ENCODE measurements at regions of chr9 and their contacts with region 1.

Region 1: DNA sequence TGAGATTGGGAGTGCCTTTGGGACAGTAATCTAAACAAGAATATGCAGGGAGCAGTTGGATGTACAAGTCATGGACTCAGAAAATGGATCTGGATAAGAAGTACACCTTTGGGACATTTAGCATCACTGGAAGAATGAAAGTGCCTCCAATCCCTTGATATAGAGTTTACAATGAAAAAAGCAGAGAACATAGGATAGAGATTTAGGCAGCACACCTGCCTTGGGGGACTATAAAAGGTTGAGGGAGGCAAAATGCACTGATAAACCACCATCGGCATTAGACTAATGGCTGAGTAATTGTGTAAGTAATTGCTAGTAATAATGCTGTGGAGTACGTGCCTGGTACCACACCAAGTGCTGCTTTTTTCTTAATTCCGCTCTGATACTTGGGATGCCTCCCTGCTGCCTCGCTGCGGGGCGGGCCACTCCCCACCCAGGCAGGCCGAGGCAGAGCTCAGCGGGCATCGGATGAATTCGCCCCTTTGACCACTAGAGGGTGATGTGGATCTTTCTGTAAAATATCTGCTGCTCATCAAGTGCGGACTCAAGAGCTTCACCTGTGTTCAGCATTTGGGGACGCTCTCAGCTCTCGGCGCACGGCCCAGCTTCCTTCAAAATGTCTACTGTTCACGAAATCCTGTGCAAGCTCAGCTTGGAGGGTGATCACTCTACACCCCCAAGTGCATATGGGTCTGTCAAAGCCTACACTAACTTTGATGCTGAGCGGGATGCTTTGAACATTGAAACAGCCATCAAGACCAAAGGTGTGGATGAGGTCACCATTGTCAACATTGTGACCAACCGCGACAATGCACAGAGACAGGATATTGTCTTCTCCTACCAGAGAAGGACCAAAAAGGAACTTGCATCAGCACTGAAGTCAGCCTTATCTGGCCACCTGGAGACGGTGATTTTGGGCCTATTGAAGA is 99.9 kb downstream of the ANKRD18B start:
- DNase-seq: peak; percentile 78
- ATAC-seq: peak; percentile 98
- H3K4me3 Mint-ChIP-seq: no peak overlapping the region
- H3K27ac Mint-ChIP-seq: no peak overlapping the region
- H3K4me1 Mint-ChIP-seq: peaks cover 7% of the 10 kb centered on the region
- H3K27me3 Mint-ChIP-seq: peaks cover 28% of the 10 kb centered on the region
- CTCF ChIP-seq: peak; percentile 88

Region 2: GRCh38 chr9:33649463-33649862 is 25.5 kb after region 1 on chr9:
- CTCF ChIA-PET with region 1: interaction called, 19 read pairs
- POLR2A ChIA-PET with region 1: no interaction called
- intact Hi-C with region 1: no loop called
- DNase-seq: peak; percentile 55
- ATAC-seq: peak; percentile 56
- H3K4me3 Mint-ChIP-seq: no peak overlapping the region
- H3K27ac Mint-ChIP-seq: no peak overlapping the region
- H3K4me1 Mint-ChIP-seq: peaks cover 11% of the 10 kb centered on the region
- H3K27me3 Mint-ChIP-seq: peaks cover 21% of the 10 kb centered on the region
- CTCF ChIP-seq: no peak

Region 3: GRCh38 chr9:33703430-33704102 is 79.6 kb after region 1 on chr9:
- CTCF ChIA-PET with region 1: interaction called, 10 read pairs
- POLR2A ChIA-PET with region 1: no interaction called
- intact Hi-C with region 1: no loop called
- DNase-seq: no peak
- ATAC-seq: no peak
- H3K4me3 Mint-ChIP-seq: no peak overlapping the region
- H3K27ac Mint-ChIP-seq: no peak overlapping the region
- H3K4me1 Mint-ChIP-seq: peaks cover 3% of the 10 kb centered on the region
- H3K27me3 Mint-ChIP-seq: peaks cover 10% of the 10 kb centered on the region
- CTCF ChIP-seq: no peak

Region 4: GRCh38 chr9:33731142-33731541 is 107.2 kb after region 1 on chr9:
- CTCF ChIA-PET with region 1: interaction called, 353 read pairs
- POLR2A ChIA-PET with region 1: no interaction called
- intact Hi-C with region 1: no loop called
- DNase-seq: no peak
- ATAC-seq: no peak
- H3K4me3 Mint-ChIP-seq: no peak overlapping the region
- H3K27ac Mint-ChIP-seq: no peak overlapping the region
- H3K4me1 Mint-ChIP-seq: no peaks in the 10 kb centered on the region
- H3K27me3 Mint-ChIP-seq: peaks cover 5% of the 10 kb centered on the region
- CTCF ChIP-seq: no peak

Measured in activated CD8-positive, alpha-beta T cell treated with anti-CD3 and anti-CD28 coated beads for 36 hours (primary cell).